ENCODE measurements at regions of chr3 and their contacts with region 1.

Region 1: GRCh38 chr3:168865022-168865551 is 769.4 kb upstream of the GOLIM4 start:
- DNase-seq: no peak
- H3K4me3 Mint-ChIP-seq: no peak overlapping the region
- H3K27ac Mint-ChIP-seq: no peak overlapping the region
- H3K4me1 Mint-ChIP-seq: no peaks in the 10 kb centered on the region
- H3K27me3 Mint-ChIP-seq: no peaks in the 10 kb centered on the region

Region 2: GRCh38 chr3:168213920-168214319 is 651.2 kb before region 1 on chr3:
- intact Hi-C with region 1: loop called (anchors 5 kb)
- DNase-seq: no peak
- H3K4me3 Mint-ChIP-seq: peak overlapping the region; percentile 37
- H3K27ac Mint-ChIP-seq: no peak overlapping the region
- H3K4me1 Mint-ChIP-seq: peaks cover 15% of the 10 kb centered on the region
- H3K27me3 Mint-ChIP-seq: peaks cover 5% of the 10 kb centered on the region

Region 3: GRCh38 chr3:168884353-168884903 is 19.3 kb after region 1 on chr3:
- intact Hi-C with region 1: no loop called
- DNase-seq: no peak
- H3K4me3 Mint-ChIP-seq: no peak overlapping the region
- H3K27ac Mint-ChIP-seq: no peak overlapping the region
- H3K4me1 Mint-ChIP-seq: no peaks in the 10 kb centered on the region
- H3K27me3 Mint-ChIP-seq: no peaks in the 10 kb centered on the region

Region 4: GRCh38 chr3:169022457-169022856 is 157.4 kb after region 1 on chr3:
- intact Hi-C with region 1: no loop called
- DNase-seq: no peak
- H3K4me3 Mint-ChIP-seq: no peak overlapping the region
- H3K27ac Mint-ChIP-seq: no peak overlapping the region
- H3K4me1 Mint-ChIP-seq: no peaks in the 10 kb centered on the region
- H3K27me3 Mint-ChIP-seq: no peaks in the 10 kb centered on the region

Region 5: GRCh38 chr3:169744366-169745054 is 879.4 kb after region 1 on chr3:
- intact Hi-C with region 1: loop called (anchors 5 kb)
- DNase-seq: no peak
- H3K4me3 Mint-ChIP-seq: no peak overlapping the region
- H3K27ac Mint-ChIP-seq: no peak overlapping the region
- H3K4me1 Mint-ChIP-seq: peaks cover 8% of the 10 kb centered on the region
- H3K27me3 Mint-ChIP-seq: peaks cover 26% of the 10 kb centered on the region

Measured in activated T-helper 1 cell treated with anti-CD3 and anti-CD28 coated beads, Interleukin-12 subunit alpha, Interleukin-12 subunit beta, Interleukin-2, Interleukin-4 antibody, amounts not matched to agents 30 ng/mL and 10 ng/mL and 1 ng/mL, durations not matched to agents 14 hours and 24 hours and 36 hours (primary cell).